ENCODE measurements at regions of chr12 and their contacts with region 1.

Region 1: GRCh38 chr12:12819671-12820311 is 6.6 kb downstream of the DDX47 start:
- H3K4me3 Mint-ChIP-seq: no peak overlapping the region
- H3K27ac Mint-ChIP-seq: no peak overlapping the region
- H3K4me1 Mint-ChIP-seq: peaks cover 25% of the 10 kb centered on the region
- H3K27me3 Mint-ChIP-seq: no peaks in the 10 kb centered on the region

Region 2: DNA sequence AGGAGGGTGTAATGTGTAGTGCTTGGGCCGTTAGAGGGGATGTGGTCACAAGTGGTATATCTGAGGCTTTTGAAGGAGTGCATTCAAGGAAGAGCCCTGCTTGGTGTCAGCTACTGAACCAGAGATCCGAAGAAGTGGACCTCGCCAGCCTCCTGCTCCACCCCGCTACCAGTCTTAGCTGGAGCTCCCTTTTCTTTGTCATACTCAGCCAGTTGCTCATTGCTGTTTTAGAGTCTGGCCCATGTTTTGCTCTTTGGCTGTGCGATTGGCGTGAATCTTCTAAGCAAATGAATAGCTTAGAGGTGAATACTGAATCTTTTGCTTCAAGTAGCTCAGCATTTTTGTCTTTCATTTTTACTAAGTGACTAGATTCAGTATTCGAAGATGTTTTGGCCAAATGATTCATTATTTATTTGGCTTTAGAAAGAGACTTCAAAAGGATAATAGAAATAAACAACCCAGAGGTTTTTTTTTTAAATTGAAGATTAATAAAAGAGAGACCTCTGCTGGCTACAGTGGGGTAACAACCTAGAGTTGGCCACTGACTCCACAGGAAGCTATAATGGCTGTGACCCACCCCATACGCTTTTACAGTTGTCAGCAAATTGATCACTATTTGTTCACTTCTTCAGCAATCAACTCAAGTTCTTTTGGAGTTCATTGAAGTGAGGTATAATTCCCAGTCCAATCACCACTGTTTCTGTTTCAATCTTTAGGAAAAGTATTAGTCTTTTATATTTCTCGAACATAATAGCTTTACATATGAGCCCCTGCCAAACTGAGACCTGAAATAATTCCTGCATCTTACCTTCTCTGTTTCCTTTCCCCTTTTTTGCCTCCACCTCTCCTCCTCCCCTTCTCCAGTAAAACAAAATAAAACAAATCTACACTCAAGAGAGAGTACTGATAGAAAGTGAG is 82.8 kb before region 1 on chr12:
- intact Hi-C with region 1: no loop called
- H3K4me3 Mint-ChIP-seq: no peak overlapping the region
- H3K27ac Mint-ChIP-seq: peak overlapping the region; percentile 63
- H3K4me1 Mint-ChIP-seq: peaks cover 13% of the 10 kb centered on the region
- H3K27me3 Mint-ChIP-seq: no peaks in the 10 kb centered on the region

Region 3: GRCh38 chr12:12975322-12976077 is 155.7 kb after region 1 on chr12:
- intact Hi-C with region 1: loop called (anchors 10 kb)
- H3K4me3 Mint-ChIP-seq: no peak overlapping the region
- H3K27ac Mint-ChIP-seq: peak overlapping the region; percentile 11
- H3K4me1 Mint-ChIP-seq: no peaks in the 10 kb centered on the region
- H3K27me3 Mint-ChIP-seq: no peaks in the 10 kb centered on the region